ENCODE measurements at regions of chr3 and their contacts with region 1.

Region 1: DNA sequence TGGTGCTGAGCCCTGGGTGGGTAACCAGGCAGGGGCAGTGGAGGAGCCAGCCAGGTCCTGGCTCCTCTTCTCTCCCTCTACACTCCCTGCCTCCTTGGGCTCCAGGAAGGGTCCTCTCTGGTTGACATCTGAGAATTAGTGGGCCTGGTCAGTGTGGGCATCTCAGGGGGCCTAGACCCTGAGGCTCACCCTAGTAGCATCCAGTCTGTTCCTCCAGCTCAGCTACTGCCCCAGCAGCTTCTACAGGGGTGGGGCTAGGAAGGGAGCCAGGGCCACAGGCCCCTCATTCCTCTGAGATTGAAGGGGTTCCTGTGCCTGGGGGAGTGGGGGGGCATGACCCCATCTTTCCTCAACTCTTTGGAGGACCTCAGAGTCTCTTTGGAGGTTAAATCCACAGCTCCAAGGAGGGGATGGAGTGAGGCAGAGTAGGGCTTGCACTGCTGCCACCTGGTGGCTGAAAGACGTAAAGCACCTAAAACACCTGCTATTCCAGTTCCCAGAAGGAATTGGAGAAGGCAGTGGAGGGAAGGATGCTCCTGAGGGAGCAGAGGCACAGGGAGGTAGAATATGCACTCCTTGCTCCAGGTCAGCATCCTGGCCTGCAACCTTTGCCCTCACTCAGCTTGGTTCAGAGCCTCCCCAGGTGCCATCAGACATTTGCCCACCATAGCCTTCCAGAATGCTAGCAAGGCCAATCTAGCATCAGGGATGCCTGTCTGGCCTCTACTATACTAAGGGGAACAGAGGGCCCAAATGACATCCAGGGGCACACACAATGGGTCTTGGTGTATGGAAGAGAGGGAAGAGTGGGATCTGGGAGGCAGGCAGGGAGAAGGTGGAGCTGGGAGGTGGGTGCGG is 25.1 kb downstream of the C3orf18 start:
- DNase-seq: peak; percentile 75
- H3K4me3 ChIP-seq: no peak overlapping the region
- H3K27ac ChIP-seq: no peak overlapping the region
- H3K4me1 ChIP-seq: no peaks in the 10 kb centered on the region
- H3K27me3 ChIP-seq: peaks cover 6% of the 10 kb centered on the region
- CTCF ChIP-seq: peak; percentile 80 to 94 (median 88)
- EP300 ChIP-seq: no peak
- POLR2A ChIP-seq: no peak

Region 2: DNA sequence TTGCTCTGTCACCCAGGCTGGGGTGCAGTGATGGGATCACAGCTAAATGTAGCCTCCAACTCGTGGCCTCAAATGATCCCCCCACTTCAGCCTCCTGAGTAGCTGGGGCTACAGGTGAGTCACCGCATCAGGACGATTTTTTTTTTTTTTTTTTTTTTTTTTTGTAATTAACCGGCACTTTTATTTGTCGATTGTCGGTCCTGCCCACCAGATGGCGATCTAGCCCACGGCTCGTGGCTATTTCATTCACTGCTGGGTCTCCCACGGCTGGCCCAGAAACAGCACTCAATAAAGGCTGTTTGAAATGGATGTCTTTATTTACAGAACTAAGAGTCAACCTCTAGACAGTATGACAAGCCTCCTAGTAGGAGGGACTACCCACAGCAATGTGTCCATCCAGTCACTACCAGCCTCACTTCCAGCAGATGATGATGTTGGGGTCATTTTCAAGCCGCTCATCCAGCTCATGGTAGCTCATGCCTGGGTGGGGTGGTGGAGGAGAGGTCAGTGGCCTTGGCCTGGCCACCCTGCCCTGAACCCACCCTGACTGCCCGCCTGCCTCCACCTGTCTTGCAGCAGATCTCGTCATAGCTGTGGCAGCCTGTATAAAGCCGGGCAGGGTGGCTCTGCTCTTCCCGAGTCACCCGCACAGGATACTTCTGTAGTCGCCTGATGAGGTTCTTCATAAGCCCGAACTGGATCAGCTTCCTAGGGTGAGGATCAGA is 195.1 kb before region 1 on chr3:
- in situ Hi-C with region 1: loop called in 1 of 4 experiments (anchors 10 kb)
- intact Hi-C with region 1: loop called (anchors 10 kb)
- DNase-seq: peak; percentile 79
- H3K4me3 ChIP-seq: no peak overlapping the region
- H3K27ac ChIP-seq: peak overlapping the region in 1 of 4 donors; percentile 27
- H3K4me1 ChIP-seq: peaks cover 25 to 43% (median 35%) of the 10 kb centered on the region in 4 donors
- H3K27me3 ChIP-seq: no peaks in the 10 kb centered on the region
- CTCF ChIP-seq: peak; percentile 45 to 60 (median 57)
- EP300 ChIP-seq: no peak
- POLR2A ChIP-seq: no peak

Region 3: DNA sequence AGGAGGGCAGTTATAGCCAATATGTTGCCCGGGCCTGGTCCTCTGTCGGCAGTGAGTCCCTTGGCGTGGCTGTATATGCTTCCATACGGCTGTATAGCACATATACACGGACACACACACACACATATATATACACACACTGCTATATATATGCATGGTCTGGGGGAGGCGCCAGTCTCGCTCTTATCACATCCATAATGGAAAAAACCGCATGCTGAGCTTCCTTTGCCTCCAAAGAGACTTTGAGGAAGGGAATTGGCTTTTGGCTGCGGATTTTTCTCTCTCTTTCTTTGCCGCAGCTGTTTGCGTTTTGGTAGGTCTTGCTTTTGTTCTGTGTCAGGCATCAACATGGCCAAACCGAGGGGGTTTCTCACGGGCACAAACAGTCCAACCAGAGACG is 171.8 kb before region 1 on chr3:
- in situ Hi-C with region 1: no loop called
- intact Hi-C with region 1: loop called (anchors 10 kb)
- DNase-seq: no peak
- H3K4me3 ChIP-seq: no peak overlapping the region
- H3K27ac ChIP-seq: no peak overlapping the region
- H3K4me1 ChIP-seq: peaks cover 0 to 13% (median 2%) of the 10 kb centered on the region in 4 donors
- H3K27me3 ChIP-seq: peaks cover 4% of the 10 kb centered on the region
- CTCF ChIP-seq: no peak
- EP300 ChIP-seq: no peak
- POLR2A ChIP-seq: no peak

Region 4: GRCh38 chr3:50436114-50436674 is 106.2 kb before region 1 on chr3:
- in situ Hi-C with region 1: loop called in 2 of 4 experiments (anchors 10 kb)
- intact Hi-C with region 1: loop called (anchors 10 kb)
- DNase-seq: peak; percentile 72
- H3K4me3 ChIP-seq: no peak overlapping the region
- H3K27ac ChIP-seq: no peak overlapping the region
- H3K4me1 ChIP-seq: no peaks in the 10 kb centered on the region
- H3K27me3 ChIP-seq: no peaks in the 10 kb centered on the region
- CTCF ChIP-seq: peak; percentile 69 to 83 (median 76)
- EP300 ChIP-seq: no peak
- POLR2A ChIP-seq: no peak